Activated naive CD4-positive, alpha-beta T cell treated with anti-CD3 and anti-CD28 coated beads, Interleukin-2, amount 10 ng/mL, durations not matched to agents 7 days and 5 days (primary cell): ENCODE measurements at regions of chr13 and their contacts with region 1.

Region 1: GRCh38 chr13:99501184-99501847 is at the start of gene TM9SF2:
- DNase-seq: peak; percentile 98
- H3K4me3 Mint-ChIP-seq: peak within 1 kb of the TSS; percentile 93
- H3K27ac Mint-ChIP-seq: peak within 1 kb of the TSS; percentile 97
- H3K4me1 Mint-ChIP-seq: peaks cover 86% of the 10 kb centered on the region
- H3K27me3 Mint-ChIP-seq: peaks cover 5% of the 10 kb centered on the region

Region 2: DNA sequence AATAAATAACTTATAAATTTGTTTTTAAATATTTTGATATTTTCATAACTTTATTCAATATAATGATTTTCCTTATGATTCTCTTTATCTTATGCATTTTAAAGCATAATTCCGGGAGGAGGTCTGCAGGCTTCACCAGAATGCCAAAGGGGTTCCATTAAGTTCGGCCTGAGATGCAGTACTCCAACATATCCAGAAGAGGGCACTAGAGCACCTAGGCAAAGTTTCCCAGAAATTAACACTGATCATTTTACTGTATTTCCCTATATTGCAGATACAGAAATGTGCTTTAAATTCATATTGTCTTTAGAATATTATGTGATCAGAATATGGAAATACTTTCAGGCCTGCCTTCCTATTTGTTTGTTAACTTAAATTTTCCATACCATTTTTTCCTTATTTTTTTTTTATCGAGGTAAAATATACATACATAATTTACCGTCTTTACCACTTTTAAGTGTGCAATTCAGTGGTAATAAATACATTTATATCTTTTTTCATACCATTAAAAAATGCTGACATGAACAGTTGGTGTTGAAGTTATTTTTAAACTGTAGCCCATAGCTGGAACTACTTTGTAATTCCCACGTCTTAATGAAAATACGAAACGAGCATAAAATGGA is 58.9 kb before region 1 on chr13:
- CTCF ChIA-PET with region 1: interaction called, 39 read pairs
- DNase-seq: peak; percentile 68
- H3K4me3 Mint-ChIP-seq: no peak overlapping the region
- H3K27ac Mint-ChIP-seq: no peak overlapping the region
- H3K4me1 Mint-ChIP-seq: peaks cover 18% of the 10 kb centered on the region
- H3K27me3 Mint-ChIP-seq: peaks cover 24% of the 10 kb centered on the region

Region 3: DNA sequence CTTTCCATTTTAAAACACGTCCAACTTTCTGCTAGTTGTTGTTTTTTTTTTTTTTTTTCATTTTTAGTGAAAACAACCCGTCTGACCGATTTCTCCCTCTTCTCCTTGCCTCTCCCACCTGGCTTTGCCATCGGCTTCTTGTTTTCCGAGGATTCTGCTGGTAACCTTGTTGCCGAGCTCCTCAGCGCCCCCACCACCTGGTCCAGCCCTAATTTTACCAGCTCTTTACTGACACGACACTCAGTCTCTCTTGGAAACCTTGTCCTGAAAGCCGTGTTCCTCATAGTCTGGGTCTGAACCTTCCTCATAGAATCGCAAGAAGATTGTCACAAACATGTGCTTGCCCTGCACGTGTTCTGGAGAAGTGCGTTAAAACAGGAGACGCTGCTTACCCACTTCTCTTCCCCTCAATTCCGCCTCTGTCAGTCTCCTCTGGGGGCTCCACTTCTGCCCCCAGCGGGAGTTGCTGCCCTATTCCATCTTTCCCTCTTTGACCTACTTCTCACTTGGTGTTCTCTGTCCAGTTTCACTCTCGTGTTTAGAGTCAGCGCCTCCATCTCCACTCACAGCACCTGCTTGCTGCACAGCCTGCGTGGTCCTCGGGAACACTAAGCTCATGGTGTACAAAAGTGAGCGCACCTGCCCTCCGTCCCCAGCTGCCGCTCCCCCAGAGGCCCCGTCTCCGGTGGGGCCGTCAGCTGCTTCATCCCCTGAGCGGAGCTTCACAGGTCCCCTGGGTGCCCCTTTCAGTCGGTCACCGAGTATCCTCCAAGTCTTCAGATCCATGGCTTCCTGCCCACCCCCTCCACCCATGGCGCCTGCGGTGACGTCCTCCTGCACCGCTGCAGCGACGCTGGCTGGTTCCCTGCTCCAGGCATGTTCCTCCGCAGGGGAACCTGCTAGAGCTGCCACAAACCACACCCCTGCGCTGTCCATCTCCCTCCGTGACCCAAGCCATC is 65.1 kb after region 1 on chr13:
- CTCF ChIA-PET with region 1: no interaction called
- DNase-seq: no peak
- H3K4me3 Mint-ChIP-seq: peak overlapping the region; percentile 65
- H3K27ac Mint-ChIP-seq: peak overlapping the region; percentile 11
- H3K4me1 Mint-ChIP-seq: peaks cover 20% of the 10 kb centered on the region
- H3K27me3 Mint-ChIP-seq: no peaks in the 10 kb centered on the region